ENCODE measurements at regions of chr9 and their contacts with region 1.

Region 1: DNA sequence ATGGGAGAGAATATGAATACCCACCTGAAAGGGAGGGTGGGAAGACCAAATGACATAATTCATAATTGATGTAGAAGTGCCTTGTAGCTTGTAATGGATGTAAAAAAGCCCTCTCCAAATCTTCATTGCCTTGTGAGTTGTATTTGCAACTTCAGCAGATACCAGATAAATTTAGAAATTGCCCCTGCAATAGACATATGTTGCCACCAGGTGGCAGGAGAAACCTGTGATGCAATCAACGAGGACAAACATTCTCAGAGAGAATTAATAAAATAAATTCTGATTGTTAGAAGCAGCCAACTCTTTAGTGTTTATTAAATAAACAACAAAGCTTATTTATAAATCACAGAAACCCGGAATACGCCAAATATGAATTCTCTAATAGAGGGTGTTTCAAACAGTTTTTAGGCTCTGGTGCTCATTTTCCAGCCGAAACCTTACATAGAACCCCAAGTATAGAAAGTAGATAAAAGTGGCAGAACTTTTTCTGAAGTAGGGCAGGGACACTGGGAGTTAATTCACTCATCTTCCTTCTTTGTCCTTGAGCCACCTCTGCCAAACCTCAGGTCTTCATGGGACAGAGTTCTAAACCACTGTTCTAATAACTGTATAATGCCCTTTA is 147.8 kb downstream of the TMEM38B start:
- DNase-seq: peak; percentile 3
- H3K4me3 ChIP-seq: no peak overlapping the region
- CTCF ChIP-seq: peak; percentile 42

Region 2: GRCh38 chr9:105854026-105854783 is 12.1 kb after region 1 on chr9:
- CTCF ChIA-PET with region 1: interaction called, 11 read pairs
- POLR2A ChIA-PET with region 1: no interaction called
- DNase-seq: no peak
- H3K4me3 ChIP-seq: no peak overlapping the region
- CTCF ChIP-seq: no peak

Region 3: DNA sequence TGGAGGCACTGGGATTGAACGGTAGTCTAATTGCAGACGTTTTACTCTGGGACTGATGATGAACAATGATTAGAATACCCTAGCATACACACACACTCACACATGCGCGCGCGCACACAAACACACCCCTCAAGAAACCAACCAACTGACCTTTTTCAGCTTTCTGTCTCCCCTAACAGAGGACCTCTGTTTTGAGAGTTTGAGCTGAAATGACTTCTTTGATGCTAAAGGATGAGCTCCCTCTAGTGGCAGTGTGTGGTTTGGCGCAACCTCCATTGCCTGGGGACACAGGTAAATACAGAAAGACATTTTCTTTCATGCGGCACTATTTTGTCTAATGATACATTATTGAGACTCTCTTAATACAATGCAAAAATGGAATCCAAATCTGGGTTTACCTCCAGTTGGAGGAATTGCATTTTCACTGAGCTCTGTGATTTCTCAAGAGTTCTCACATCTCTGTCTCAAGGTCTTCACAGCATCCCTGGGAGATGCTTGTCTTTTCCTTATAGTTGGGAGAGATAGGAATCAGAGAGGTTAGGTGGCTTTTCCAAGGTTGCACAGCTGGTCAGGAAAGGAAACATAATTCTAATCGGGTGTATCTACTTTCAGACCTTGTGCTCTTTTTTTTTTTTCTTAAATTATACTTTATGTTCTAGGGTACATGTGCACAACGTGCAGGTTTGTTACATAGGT is 39.7 kb after region 1 on chr9:
- CTCF ChIA-PET with region 1: interaction called, 16 read pairs
- POLR2A ChIA-PET with region 1: no interaction called
- DNase-seq: no peak
- H3K4me3 ChIP-seq: no peak overlapping the region
- CTCF ChIP-seq: peak; percentile 78

Region 4: GRCh38 chr9:106862825-106863720 is 1020.9 kb after region 1 on chr9 and contains the start of gene ZNF462:
- CTCF ChIA-PET with region 1: interaction called, 11 read pairs
- POLR2A ChIA-PET with region 1: no interaction called
- DNase-seq: no peak
- H3K4me3 ChIP-seq: peak within 1 kb of the TSS; percentile 82
- CTCF ChIP-seq: peak; percentile 28

Region 5: DNA sequence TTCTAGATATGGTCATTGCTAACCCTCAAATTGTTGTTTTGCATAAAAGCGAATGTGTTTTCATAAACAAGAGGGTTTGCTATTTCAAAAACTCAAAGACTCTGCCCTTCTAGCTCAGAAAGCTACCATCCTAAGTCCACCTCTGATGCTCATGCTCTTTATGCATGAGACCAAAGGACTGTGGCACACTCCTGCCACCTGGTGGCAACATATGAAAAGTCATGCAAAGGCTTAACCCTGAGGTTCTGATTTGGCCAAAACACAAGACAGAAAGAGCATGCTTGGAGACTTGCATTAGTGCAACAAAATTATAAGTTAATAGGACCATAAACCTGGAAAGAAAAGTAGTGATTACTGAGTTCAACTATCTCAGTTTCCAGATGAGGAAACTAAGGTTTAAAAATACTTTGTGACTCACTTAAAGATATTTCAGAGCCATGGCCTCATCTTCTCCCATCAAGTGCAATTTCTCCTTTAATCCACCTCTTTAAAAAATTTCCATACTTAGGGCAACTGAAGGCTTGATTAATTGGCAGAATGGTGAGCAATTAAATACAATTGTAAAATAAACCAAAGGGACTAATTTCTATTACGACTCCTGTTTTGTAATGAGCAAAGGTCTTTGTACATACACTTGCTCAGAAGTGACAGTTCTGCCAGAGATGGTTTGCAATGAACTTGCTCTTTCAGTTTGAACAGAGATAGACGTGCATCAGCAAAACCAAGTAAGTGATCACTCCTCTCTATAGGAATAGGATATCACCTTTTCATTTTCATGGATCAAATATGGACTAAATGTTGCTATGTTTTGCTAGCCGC is 1330.2 kb after region 1 on chr9:
- CTCF ChIA-PET with region 1: interaction called, 23 read pairs
- POLR2A ChIA-PET with region 1: no interaction called
- DNase-seq: peak; percentile 17
- H3K4me3 ChIP-seq: no peak overlapping the region
- CTCF ChIP-seq: peak; percentile 76